ENCODE measurements at regions of chr2 and their contacts with region 1.

Region 1: DNA sequence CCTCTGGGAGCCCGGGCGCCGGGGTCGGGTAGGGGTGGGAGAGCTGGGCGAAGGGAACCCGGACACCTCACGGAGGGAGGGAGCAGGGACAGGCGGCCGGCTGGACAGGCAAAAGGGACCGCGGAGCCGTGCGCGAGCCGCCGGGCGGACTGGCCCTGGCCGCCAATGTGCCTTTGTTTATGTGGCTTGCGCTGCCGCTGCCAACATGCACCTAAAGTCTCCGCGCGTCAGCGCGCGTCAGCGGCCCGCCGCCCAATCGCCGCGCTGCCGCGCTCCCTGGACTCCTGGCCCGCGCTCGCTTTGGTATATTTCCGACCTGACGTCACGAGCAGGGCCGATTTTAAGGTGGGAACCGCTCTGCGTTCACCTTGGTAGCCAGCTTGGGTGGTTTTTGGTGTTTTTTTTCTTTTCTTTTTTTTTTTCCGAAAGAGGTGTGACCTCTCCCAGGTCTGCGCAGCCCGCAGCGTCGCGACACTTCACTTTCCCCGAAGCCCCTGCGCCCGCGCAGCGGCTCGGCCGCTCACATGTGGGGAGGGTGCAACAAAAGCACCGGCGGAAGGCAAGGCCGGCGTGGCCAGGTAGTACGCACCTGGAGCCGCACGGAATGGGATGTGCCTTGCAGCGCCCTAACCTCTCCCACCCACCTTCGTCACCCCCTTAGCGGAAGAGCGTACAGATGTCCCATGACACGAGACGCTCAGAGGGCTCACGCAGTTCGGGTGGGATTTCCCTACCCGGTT is at the start of gene NR4A2:
- DNase-seq: peak; percentile 84
- H3K4me3 ChIP-seq: peak within 1 kb of the TSS; percentile 61
- H3K4me3 Mint-ChIP-seq: peak within 1 kb of the TSS; percentile 94
- H3K27ac Mint-ChIP-seq: peak within 1 kb of the TSS; percentile 97
- H3K4me1 ChIP-seq: no peaks in the 10 kb centered on the region
- H3K4me1 Mint-ChIP-seq: peaks cover 8% of the 10 kb centered on the region
- H3K27me3 ChIP-seq: no peaks in the 10 kb centered on the region
- H3K27me3 Mint-ChIP-seq: peaks cover 3% of the 10 kb centered on the region
- CTCF ChIP-seq: no peak
- total RNA-seq, gene NR4A2: 0.91 and 0.97 TPM in 2 replicates

Region 2: GRCh38 chr2:155997538-155997937 is 335.2 kb before region 1 on chr2:
- CTCF ChIA-PET with region 1: no interaction called
- POLR2A ChIA-PET with region 1: no interaction called
- intact Hi-C with region 1: loop called (anchors 5 kb)
- DNase-seq: no peak
- H3K4me3 ChIP-seq: no peak overlapping the region
- H3K4me3 Mint-ChIP-seq: no peak overlapping the region
- H3K27ac Mint-ChIP-seq: no peak overlapping the region
- H3K4me1 ChIP-seq: no peaks in the 10 kb centered on the region
- H3K4me1 Mint-ChIP-seq: no peaks in the 10 kb centered on the region
- H3K27me3 ChIP-seq: no peaks in the 10 kb centered on the region
- H3K27me3 Mint-ChIP-seq: no peaks in the 10 kb centered on the region
- CTCF ChIP-seq: no peak

Region 3: DNA sequence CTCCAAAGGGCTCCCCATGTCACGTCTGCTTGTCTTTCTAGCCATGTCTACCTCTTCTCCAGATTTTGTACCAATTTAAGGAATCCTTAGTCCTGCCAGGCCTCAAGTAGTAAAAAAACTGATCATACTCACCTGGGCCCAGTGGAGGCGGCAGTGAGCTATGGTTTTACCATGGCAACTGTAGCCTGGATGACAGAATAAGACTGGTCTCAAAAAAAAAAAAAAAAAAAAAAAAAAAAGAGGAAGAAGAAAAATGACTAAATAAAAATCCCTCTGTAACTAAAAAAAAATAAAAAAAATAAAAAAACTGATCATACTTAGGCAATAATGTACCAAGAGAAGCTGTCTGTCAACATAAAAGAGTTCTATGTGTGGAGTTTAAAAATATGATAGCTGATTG is 221.8 kb before region 1 on chr2:
- CTCF ChIA-PET with region 1: no interaction called
- POLR2A ChIA-PET with region 1: no interaction called
- intact Hi-C with region 1: loop called (anchors 5 kb)
- DNase-seq: peak; percentile 37 to 48
- H3K4me3 ChIP-seq: no peak overlapping the region
- H3K4me3 Mint-ChIP-seq: no peak overlapping the region
- H3K27ac Mint-ChIP-seq: no peak overlapping the region
- H3K4me1 ChIP-seq: no peaks in the 10 kb centered on the region
- H3K4me1 Mint-ChIP-seq: no peaks in the 10 kb centered on the region
- H3K27me3 ChIP-seq: no peaks in the 10 kb centered on the region
- H3K27me3 Mint-ChIP-seq: no peaks in the 10 kb centered on the region
- CTCF ChIP-seq: peak in 1 of 2 experiments; percentile 32

Region 4: GRCh38 chr2:156253765-156254164 is 78.9 kb before region 1 on chr2:
- CTCF ChIA-PET with region 1: no interaction called
- POLR2A ChIA-PET with region 1: no interaction called
- intact Hi-C with region 1: loop called (anchors 5 kb)
- DNase-seq: no peak
- H3K4me3 ChIP-seq: peak overlapping the region; percentile 26
- H3K4me3 Mint-ChIP-seq: peak overlapping the region; percentile 80
- H3K27ac Mint-ChIP-seq: peak overlapping the region; percentile 95
- H3K4me1 ChIP-seq: peaks cover 6% of the 10 kb centered on the region
- H3K4me1 Mint-ChIP-seq: peaks cover 8% of the 10 kb centered on the region
- H3K27me3 ChIP-seq: no peaks in the 10 kb centered on the region
- H3K27me3 Mint-ChIP-seq: no peaks in the 10 kb centered on the region
- CTCF ChIP-seq: no peak

Region 5: GRCh38 chr2:156311976-156312375 is 20.7 kb before region 1 on chr2:
- CTCF ChIA-PET with region 1: no interaction called
- POLR2A ChIA-PET with region 1: no interaction called
- intact Hi-C with region 1: loop called (anchors 2 kb)
- DNase-seq: no peak
- H3K4me3 ChIP-seq: no peak overlapping the region
- H3K4me3 Mint-ChIP-seq: no peak overlapping the region
- H3K27ac Mint-ChIP-seq: no peak overlapping the region
- H3K4me1 ChIP-seq: peaks cover 5% of the 10 kb centered on the region; the same call in 1 of the 2 replicates
- H3K4me1 Mint-ChIP-seq: no peaks in the 10 kb centered on the region
- H3K27me3 ChIP-seq: no peaks in the 10 kb centered on the region
- H3K27me3 Mint-ChIP-seq: peaks cover 12% of the 10 kb centered on the region
- CTCF ChIP-seq: no peak

Region 6: GRCh38 chr2:156435715-156436496 is 103.2 kb after region 1 on chr2 and contains the start of gene GPD2:
- CTCF ChIA-PET with region 1: interaction called, 3 read pairs
- POLR2A ChIA-PET with region 1: no interaction called
- intact Hi-C with region 1: loop called (anchors 1 kb)
- DNase-seq: peak; percentile 93 to 94
- H3K4me3 ChIP-seq: peak within 1 kb of the TSS; percentile 48
- H3K4me3 Mint-ChIP-seq: peak within 1 kb of the TSS; percentile 90
- H3K27ac Mint-ChIP-seq: peak within 1 kb of the TSS; percentile 83
- H3K4me1 ChIP-seq: peaks cover 27% of the 10 kb centered on the region
- H3K4me1 Mint-ChIP-seq: peaks cover 17% of the 10 kb centered on the region
- H3K27me3 ChIP-seq: no peaks in the 10 kb centered on the region
- H3K27me3 Mint-ChIP-seq: no peaks in the 10 kb centered on the region
- CTCF ChIP-seq: peak in 1 of 2 experiments; percentile 36
- total RNA-seq, gene GPD2: 56.8 and 58.3 TPM in 2 replicates

Region 7: DNA sequence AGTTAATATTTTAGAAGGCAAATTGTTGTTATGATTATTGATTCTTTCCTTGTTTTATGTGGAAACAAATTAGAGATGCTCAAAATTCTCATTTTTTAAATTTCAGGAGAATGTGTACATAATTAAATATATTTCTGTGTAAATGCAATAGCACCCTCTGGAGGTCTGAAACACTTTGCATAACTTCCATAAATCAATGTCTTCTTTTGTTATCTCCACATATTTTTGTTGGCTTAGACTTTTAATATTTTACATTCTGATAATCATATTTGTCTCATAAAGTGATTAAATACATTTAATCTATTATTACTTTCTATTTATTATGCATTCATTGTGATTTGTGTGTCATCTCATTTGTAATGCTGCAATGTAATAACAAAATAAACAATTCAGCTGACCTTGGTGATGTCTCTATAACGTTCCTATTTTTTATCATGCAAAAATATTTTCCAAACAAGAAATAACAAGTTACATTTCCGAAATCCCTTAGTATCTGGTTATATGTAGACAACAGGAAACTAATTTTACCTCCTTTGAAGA is 723.0 kb after region 1 on chr2:
- CTCF ChIA-PET with region 1: no interaction called
- POLR2A ChIA-PET with region 1: no interaction called
- intact Hi-C with region 1: loop called (anchors 10 kb)
- DNase-seq: peak in 1 of 2 experiments; percentile 13
- H3K4me3 ChIP-seq: no peak overlapping the region
- H3K4me3 Mint-ChIP-seq: no peak overlapping the region
- H3K27ac Mint-ChIP-seq: no peak overlapping the region
- H3K4me1 ChIP-seq: peaks cover 8% of the 10 kb centered on the region
- H3K4me1 Mint-ChIP-seq: peaks cover 7% of the 10 kb centered on the region
- H3K27me3 ChIP-seq: no peaks in the 10 kb centered on the region
- H3K27me3 Mint-ChIP-seq: no peaks in the 10 kb centered on the region
- CTCF ChIP-seq: peak; percentile 40 to 47